ENCODE measurements at regions of chr3 and their contacts with region 1.

Region 1: DNA sequence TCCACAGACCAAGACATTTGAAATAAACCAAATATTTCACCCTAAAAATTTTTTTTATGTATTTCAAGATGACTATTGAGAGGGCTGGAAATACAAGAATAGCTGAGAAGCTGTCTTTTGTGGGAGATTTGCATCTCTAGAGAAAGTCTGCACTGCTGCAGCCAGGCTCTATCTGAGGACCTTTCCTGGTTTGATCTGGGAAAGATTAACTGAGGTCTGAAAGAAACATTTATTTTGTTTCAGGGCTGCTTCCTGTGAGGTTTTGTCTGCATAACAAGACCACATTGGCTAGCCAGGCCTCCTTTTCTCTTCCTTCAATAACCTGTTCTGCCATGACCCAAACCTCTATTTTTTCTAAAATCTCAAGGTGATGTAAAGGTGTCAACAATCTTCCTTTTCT is 117.5 kb upstream of the ARHGEF26 start:
- DNase-seq: no peak
- H3K4me3 ChIP-seq: no peak overlapping the region
- H3K27ac ChIP-seq: no peak overlapping the region
- H3K4me1 ChIP-seq: no peaks in the 10 kb centered on the region
- H3K27me3 ChIP-seq: no peaks in the 10 kb centered on the region
- CTCF ChIP-seq: no peak
- POLR2A ChIP-seq: no peak

Region 2: GRCh38 chr3:153880493-153880892 is 123.2 kb before region 1 on chr3:
- intact Hi-C with region 1: no loop called
- DNase-seq: no peak
- H3K4me3 ChIP-seq: no peak overlapping the region
- H3K27ac ChIP-seq: no peak overlapping the region
- H3K4me1 ChIP-seq: no peaks in the 10 kb centered on the region
- H3K27me3 ChIP-seq: no peaks in the 10 kb centered on the region
- CTCF ChIP-seq: no peak
- POLR2A ChIP-seq: no peak

Region 3: GRCh38 chr3:155149494-155149893 is 1145.8 kb after region 1 on chr3:
- intact Hi-C with region 1: loop called (anchors 5 kb)
- DNase-seq: no peak
- H3K4me3 ChIP-seq: no peak overlapping the region
- H3K27ac ChIP-seq: no peak overlapping the region
- H3K4me1 ChIP-seq: no peaks in the 10 kb centered on the region
- H3K27me3 ChIP-seq: no peaks in the 10 kb centered on the region
- CTCF ChIP-seq: no peak
- POLR2A ChIP-seq: no peak

Measured in vagina (tissue), 2 donors.